HCT116 (cell line): ENCODE measurements at regions of chr18 and their contacts with region 1.

Region 1: DNA sequence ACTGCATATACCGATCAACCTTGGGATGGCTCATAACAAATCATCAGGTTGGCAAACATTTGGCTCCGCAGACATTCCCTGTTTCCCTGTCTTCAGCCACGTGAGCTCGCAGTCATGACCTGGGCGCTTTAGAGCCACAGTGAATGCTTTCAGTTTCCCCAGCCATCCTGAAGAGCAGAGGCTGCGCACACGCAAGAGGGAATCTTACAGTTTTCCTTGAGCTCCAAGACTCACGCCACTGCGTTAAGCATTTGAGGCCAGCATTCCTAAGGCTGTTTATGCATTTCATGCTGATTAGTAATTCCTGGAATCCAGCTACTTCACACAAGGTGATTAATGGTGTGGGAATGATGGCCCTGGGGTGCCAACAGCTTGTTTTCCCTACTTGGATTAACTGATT is 95.1 kb downstream of the MTCL1 start:
- DNase-seq: peak; percentile 73
- ATAC-seq: peak; percentile 85
- H3K4me3 ChIP-seq: peak overlapping the region in 1 of 2 experiments; percentile 32; a peak in 2 of 4 replicates
- H3K27ac ChIP-seq: peak overlapping the region; percentile 75
- H3K4me1 ChIP-seq: peaks cover 60 to 74% of the 10 kb centered on the region in 2 experiments
- H3K27me3 ChIP-seq: no peaks in the 10 kb centered on the region
- CTCF ChIP-seq: no peak
- POLR2A ChIP-seq: no peak
- RAD21 ChIP-seq: no peak

Region 2: DNA sequence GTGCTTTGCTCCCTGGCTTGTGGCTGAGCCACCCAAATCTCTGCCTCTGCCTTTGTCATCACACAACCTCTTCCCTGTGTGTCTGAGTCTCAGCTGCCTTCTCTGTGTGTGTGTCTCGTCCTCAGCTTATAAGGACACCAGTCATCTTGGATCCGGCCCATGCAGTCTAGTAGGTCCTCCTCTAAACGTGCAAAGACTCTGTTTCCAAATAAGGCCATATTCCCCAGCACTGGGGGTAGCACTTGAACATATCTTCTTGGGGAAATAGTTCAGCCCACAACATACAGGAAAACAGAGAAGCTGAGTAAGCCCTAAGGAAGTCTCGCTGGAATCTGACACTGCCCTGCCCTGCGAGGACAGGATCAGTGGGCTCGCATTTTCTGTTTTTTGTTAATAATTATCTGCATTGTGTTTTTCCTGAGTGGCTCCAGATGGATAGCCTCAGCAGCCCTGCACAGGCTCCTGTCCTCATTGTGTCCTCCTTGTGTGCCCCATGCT is 53.0 kb before region 1 on chr18:
- CTCF ChIA-PET with region 1: no interaction called
- POLR2A ChIA-PET with region 1: no interaction called
- RAD21 ChIA-PET with region 1: no interaction called
- intact Hi-C with region 1: loop called (anchors 10 kb)
- DNase-seq: no peak
- ATAC-seq: no peak
- H3K4me3 ChIP-seq: no peak overlapping the region
- H3K27ac ChIP-seq: no peak overlapping the region
- H3K4me1 ChIP-seq: no peaks in the 10 kb centered on the region
- H3K27me3 ChIP-seq: no peaks in the 10 kb centered on the region
- CTCF ChIP-seq: no peak
- POLR2A ChIP-seq: no peak
- RAD21 ChIP-seq: no peak

Region 3: GRCh38 chr18:8982416-8983184 is 182.2 kb after region 1 on chr18:
- CTCF ChIA-PET with region 1: interaction called, 5 read pairs
- POLR2A ChIA-PET with region 1: no interaction called
- RAD21 ChIA-PET with region 1: no interaction called
- intact Hi-C with region 1: loop called (anchors 5 kb)
- DNase-seq: peak; percentile 63
- ATAC-seq: peak; percentile 97
- H3K4me3 ChIP-seq: no peak overlapping the region
- H3K27ac ChIP-seq: no peak overlapping the region
- H3K4me1 ChIP-seq: peaks cover 0 to 9% of the 10 kb centered on the region in 2 experiments; a peak in 2 of 4 replicates
- H3K27me3 ChIP-seq: no peaks in the 10 kb centered on the region
- CTCF ChIP-seq: peak; percentile 55 to 82 (median 82)
- POLR2A ChIP-seq: no peak
- RAD21 ChIP-seq: peak; percentile 91

Region 4: GRCh38 chr18:9092665-9093064 is 292.2 kb after region 1 on chr18:
- CTCF ChIA-PET with region 1: no interaction called
- POLR2A ChIA-PET with region 1: no interaction called
- RAD21 ChIA-PET with region 1: no interaction called
- intact Hi-C with region 1: no loop called
- DNase-seq: no peak
- ATAC-seq: no peak
- H3K4me3 ChIP-seq: no peak overlapping the region
- H3K27ac ChIP-seq: no peak overlapping the region
- H3K4me1 ChIP-seq: peaks cover 0 to 8% of the 10 kb centered on the region in 2 experiments; a peak in 1 of 4 replicates
- H3K27me3 ChIP-seq: no peaks in the 10 kb centered on the region
- CTCF ChIP-seq: no peak
- POLR2A ChIP-seq: no peak
- RAD21 ChIP-seq: no peak